ENCODE measurements at regions of chr10 and their contacts with region 1.

Region 1: GRCh38 chr10:91856637-91857036 is 52.6 kb downstream of the FGFBP3 start:
- DNase-seq: peak; percentile 1
- H3K4me3 Mint-ChIP-seq: no peak overlapping the region
- H3K27ac Mint-ChIP-seq: no peak overlapping the region
- H3K4me1 Mint-ChIP-seq: no peaks in the 10 kb centered on the region
- H3K27me3 Mint-ChIP-seq: no peaks in the 10 kb centered on the region
- CTCF ChIP-seq: no peak

Region 2: GRCh38 chr10:91908337-91909116 is 51.9 kb after region 1 on chr10:
- CTCF ChIA-PET with region 1: no interaction called
- intact Hi-C with region 1: loop called (anchors 5 kb)
- DNase-seq: peak; percentile 76
- H3K4me3 Mint-ChIP-seq: peak overlapping the region; percentile 79
- H3K27ac Mint-ChIP-seq: no peak overlapping the region
- H3K4me1 Mint-ChIP-seq: peaks cover 20% of the 10 kb centered on the region
- H3K27me3 Mint-ChIP-seq: peaks cover 10% of the 10 kb centered on the region
- CTCF ChIP-seq: no peak

Measured in Calu3 (cell line).